ENCODE measurements at regions of chr7 and their contacts with region 1.

Region 1: GRCh38 chr7:89809291-89809690 is 345.0 kb upstream of the STEAP1 start:
- DNase-seq: no peak
- H3K4me3 ChIP-seq: no peak overlapping the region
- H3K4me3 Mint-ChIP-seq: no peak overlapping the region
- H3K27ac ChIP-seq: no peak overlapping the region
- H3K27ac Mint-ChIP-seq: no peak overlapping the region
- H3K4me1 ChIP-seq: no peaks in the 10 kb centered on the region
- H3K4me1 Mint-ChIP-seq: no peaks in the 10 kb centered on the region
- H3K27me3 ChIP-seq: no peaks in the 10 kb centered on the region
- H3K27me3 Mint-ChIP-seq: peaks cover 0 to 2% (median 0%) of the 10 kb centered on the region in 3 donors
- CTCF ChIP-seq: no peak

Region 2: GRCh38 chr7:89731751-89732445 is 77.4 kb before region 1 on chr7:
- intact Hi-C with region 1: loop called in 1 of 2 experiments (anchors 2 kb)
- DNase-seq: no peak
- H3K4me3 ChIP-seq: no peak overlapping the region
- H3K4me3 Mint-ChIP-seq: no peak overlapping the region
- H3K27ac ChIP-seq: no peak overlapping the region
- H3K27ac Mint-ChIP-seq: no peak overlapping the region
- H3K4me1 ChIP-seq: no peaks in the 10 kb centered on the region
- H3K4me1 Mint-ChIP-seq: no peaks in the 10 kb centered on the region
- H3K27me3 ChIP-seq: no peaks in the 10 kb centered on the region
- H3K27me3 Mint-ChIP-seq: no peaks in the 10 kb centered on the region
- CTCF ChIP-seq: no peak

Region 3: DNA sequence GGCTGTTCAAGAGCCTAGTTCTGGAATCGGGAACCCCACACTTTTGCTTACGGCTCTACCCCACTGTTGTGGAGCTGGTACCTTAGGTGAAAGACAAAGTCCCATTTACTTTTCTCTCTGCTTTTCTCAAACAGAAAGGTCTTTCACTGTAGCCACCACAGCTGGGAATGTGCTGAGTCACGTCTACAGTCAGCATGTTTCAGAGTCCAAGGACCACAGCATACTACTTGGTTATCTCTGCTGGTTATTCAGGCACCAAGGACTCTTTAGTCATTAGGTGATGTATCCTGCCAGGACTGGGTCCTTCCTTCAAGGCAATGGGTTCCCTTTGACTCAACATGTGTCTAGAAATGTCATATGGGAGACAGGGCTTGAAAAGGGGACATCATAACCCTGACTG is 78.2 kb after region 1 on chr7:
- intact Hi-C with region 1: no loop called
- DNase-seq: no peak
- H3K4me3 ChIP-seq: no peak overlapping the region
- H3K4me3 Mint-ChIP-seq: no peak overlapping the region
- H3K27ac ChIP-seq: no peak overlapping the region
- H3K27ac Mint-ChIP-seq: no peak overlapping the region
- H3K4me1 ChIP-seq: no peaks in the 10 kb centered on the region
- H3K4me1 Mint-ChIP-seq: no peaks in the 10 kb centered on the region
- H3K27me3 ChIP-seq: no peaks in the 10 kb centered on the region
- H3K27me3 Mint-ChIP-seq: peaks cover 0 to 2% (median 0%) of the 10 kb centered on the region in 3 donors
- CTCF ChIP-seq: no peak